GM12878 (cell line): ENCODE measurements at regions of chr9 and their contacts with region 1.

Region 1: DNA sequence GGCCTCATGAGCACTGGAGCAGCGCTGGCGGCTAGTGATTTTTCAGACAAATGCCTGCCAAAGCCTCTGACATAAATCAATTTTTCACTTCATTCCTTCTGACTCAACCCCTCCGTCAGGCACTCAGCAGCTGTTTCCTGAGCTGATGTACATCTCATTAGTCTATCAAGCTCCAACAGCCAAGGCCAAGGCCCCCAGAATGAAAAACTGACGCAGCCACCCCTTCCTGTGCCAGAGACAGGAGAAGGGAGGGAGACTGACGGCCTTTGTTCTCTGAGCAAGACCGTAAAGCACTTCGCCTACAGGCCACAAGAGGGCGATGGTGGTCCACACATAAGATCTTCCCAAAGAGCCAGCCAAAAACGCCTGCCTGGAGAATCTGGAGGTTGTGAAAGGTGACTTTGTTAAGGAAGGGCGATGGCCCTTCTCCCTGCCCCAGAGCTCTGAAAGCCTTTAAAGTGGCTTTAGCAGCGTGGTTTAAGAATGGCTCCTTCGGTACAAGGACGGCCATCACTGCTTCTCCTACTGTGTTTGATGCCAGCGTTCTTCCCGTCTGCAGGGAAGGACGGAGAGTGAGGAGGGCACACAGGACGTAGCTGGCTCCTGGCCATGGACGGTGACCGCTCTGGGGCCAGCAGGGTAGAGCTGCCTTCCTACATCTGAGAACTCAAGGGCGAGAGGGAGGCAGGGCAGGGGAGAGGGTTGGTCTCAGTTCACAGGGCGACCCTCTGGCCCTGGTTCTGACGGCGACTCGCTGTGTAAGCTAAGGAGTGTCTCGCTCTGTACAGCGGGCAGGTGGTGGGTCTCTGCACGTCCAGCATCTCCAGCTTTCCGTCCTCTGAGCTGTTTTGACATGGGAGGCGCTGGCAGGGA is 37.0 kb downstream of the ALG2 start:
- DNase-seq: peak; percentile 80
- ATAC-seq: peak; percentile 79
- H3K4me3 ChIP-seq: no peak overlapping the region
- H3K27ac ChIP-seq: peak overlapping the region; percentile 49
- H3K4me1 ChIP-seq: peaks cover 66% of the 10 kb centered on the region
- H3K27me3 ChIP-seq: no peaks in the 10 kb centered on the region
- CTCF ChIP-seq: peak; percentile 90 to 98 (median 94)
- EP300 ChIP-seq: no peak; a peak in 1 of 4 replicates
- POLR2A ChIP-seq: 0 out of 2 replicates have a peak, but pooled peaks have one; percentile 18
- RAD21 ChIP-seq: peak; percentile 93

Region 2: GRCh38 chr9:99085949-99086948 is 98.5 kb before region 1 on chr9:
- CTCF ChIA-PET with region 1: no interaction called
- POLR2A ChIA-PET with region 1: no interaction called
- RAD21 ChIA-PET with region 1: no interaction called
- SMC1A ChIA-PET with region 1: no interaction called
- in situ Hi-C with region 1: no loop called
- intact Hi-C with region 1: no loop called
- DNase-seq: no peak
- ATAC-seq: no peak
- H3K4me3 ChIP-seq: no peak overlapping the region
- H3K27ac ChIP-seq: no peak overlapping the region
- H3K4me1 ChIP-seq: no peaks in the 10 kb centered on the region
- H3K27me3 ChIP-seq: peaks cover 0 to 1% of the 10 kb centered on the region in 2 experiments; a peak in 1 of 4 replicates
- CTCF ChIP-seq: no peak
- EP300 ChIP-seq: no peak
- POLR2A ChIP-seq: no peak
- RAD21 ChIP-seq: no peak

Region 3: GRCh38 chr9:99173570-99174504 is 10.9 kb before region 1 on chr9:
- CTCF ChIA-PET with region 1: interaction called, 131 read pairs
- POLR2A ChIA-PET with region 1: interaction called, 11 read pairs
- RAD21 ChIA-PET with region 1: interaction called, 147 read pairs
- SMC1A ChIA-PET with region 1: interaction called, 150 read pairs
- in situ Hi-C with region 1: no loop called
- intact Hi-C with region 1: no loop called
- DNase-seq: no peak
- ATAC-seq: peak; percentile 81
- H3K4me3 ChIP-seq: no peak overlapping the region
- H3K27ac ChIP-seq: no peak overlapping the region
- H3K4me1 ChIP-seq: peaks cover 8% of the 10 kb centered on the region
- H3K27me3 ChIP-seq: no peaks in the 10 kb centered on the region
- CTCF ChIP-seq: no peak
- EP300 ChIP-seq: no peak
- POLR2A ChIP-seq: no peak
- RAD21 ChIP-seq: no peak

Region 4: DNA sequence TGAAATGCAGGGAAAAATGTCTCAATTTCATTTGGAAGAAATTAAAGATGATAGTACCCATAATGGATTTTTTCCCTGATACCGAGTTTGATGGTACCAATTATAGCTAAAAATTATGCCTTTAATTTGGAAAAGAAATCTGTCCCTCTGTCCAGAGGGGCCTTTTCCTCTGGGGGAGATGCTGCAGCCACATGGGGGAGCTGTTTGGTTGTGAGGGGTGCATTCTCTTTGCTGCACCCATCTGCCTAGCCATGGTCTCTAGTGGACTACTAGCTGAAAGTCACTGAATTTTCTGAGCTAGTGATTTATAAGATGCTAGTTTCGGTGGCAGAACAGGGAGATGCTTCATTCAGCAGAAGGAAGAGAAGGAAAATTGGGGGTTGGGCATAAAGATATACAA is 47.0 kb after region 1 on chr9:
- CTCF ChIA-PET with region 1: interaction called, 116 read pairs
- POLR2A ChIA-PET with region 1: interaction called, 6 read pairs
- RAD21 ChIA-PET with region 1: interaction called, 121 read pairs
- SMC1A ChIA-PET with region 1: interaction called, 73 read pairs
- in situ Hi-C with region 1: no loop called
- intact Hi-C with region 1: loop called (anchors 5 kb)
- DNase-seq: peak; percentile 25
- ATAC-seq: peak; percentile 53
- H3K4me3 ChIP-seq: no peak overlapping the region
- H3K27ac ChIP-seq: no peak overlapping the region
- H3K4me1 ChIP-seq: peaks cover 26% of the 10 kb centered on the region
- H3K27me3 ChIP-seq: no peaks in the 10 kb centered on the region
- CTCF ChIP-seq: peak; percentile 85 to 90 (median 88)
- EP300 ChIP-seq: no peak
- POLR2A ChIP-seq: no peak
- RAD21 ChIP-seq: peak; percentile 81

Region 5: DNA sequence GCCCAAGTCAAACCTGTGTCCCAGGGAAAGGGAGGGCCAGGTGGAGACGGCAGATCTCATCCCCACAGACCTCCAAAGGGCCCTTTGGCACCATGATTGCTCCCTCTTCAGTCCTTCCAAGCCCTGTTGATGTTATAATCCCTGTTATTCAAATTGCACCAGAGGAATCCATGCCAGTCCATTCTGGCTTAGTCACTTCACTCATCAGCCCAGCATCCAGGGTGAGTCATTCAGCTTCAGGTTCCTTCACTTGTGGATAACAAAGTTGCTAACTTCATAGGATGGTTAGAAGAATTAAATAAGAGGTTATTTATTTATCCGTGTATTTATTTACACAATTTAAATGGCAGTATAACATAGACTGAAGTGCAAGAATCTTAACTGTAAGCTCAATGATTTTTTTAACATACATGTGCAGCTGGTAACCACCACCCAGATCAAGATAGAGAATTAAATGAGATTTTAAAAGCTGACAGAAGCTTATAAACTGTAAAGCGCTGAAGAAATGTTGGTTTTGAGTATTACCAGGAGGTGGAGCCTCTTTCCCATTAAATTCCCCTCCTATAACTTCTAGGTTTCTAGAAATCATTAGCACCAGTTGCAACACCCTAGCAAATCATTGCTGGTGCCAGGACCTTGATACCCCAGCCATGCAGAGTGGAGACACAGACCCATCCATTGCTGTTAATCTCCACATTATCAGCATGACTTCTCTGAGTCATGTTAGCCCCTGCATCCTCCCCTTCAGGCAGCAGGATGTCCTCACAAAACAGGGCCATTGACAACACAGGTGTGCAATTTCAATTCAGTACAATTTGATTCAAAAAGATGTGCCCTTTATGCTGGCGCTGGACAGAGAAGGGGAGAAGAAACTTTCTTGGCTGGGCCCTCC is 114.7 kb after region 1 on chr9:
- CTCF ChIA-PET with region 1: interaction called, 6 read pairs
- POLR2A ChIA-PET with region 1: no interaction called
- RAD21 ChIA-PET with region 1: interaction called, 5 read pairs
- SMC1A ChIA-PET with region 1: interaction called, 11 read pairs
- in situ Hi-C with region 1: no loop called
- intact Hi-C with region 1: no loop called
- DNase-seq: no peak
- ATAC-seq: peak; percentile 55
- H3K4me3 ChIP-seq: no peak overlapping the region
- H3K27ac ChIP-seq: no peak overlapping the region
- H3K4me1 ChIP-seq: no peaks in the 10 kb centered on the region
- H3K27me3 ChIP-seq: no peaks in the 10 kb centered on the region
- CTCF ChIP-seq: peak in 2 of 3 experiments; percentile 15 to 39; a peak in 2 of 6 replicates
- EP300 ChIP-seq: no peak
- POLR2A ChIP-seq: no peak
- RAD21 ChIP-seq: peak; percentile 61

Region 6: GRCh38 chr9:99807276-99807852 is 622.7 kb after region 1 on chr9:
- CTCF ChIA-PET with region 1: interaction called, 5 read pairs
- POLR2A ChIA-PET with region 1: no interaction called
- RAD21 ChIA-PET with region 1: no interaction called
- SMC1A ChIA-PET with region 1: interaction called, 4 read pairs
- in situ Hi-C with region 1: loop called (anchors 5 kb)
- intact Hi-C with region 1: no loop called
- DNase-seq: no peak
- ATAC-seq: peak; percentile 87
- H3K4me3 ChIP-seq: no peak overlapping the region
- H3K27ac ChIP-seq: no peak overlapping the region
- H3K4me1 ChIP-seq: peaks cover 6% of the 10 kb centered on the region
- H3K27me3 ChIP-seq: no peaks in the 10 kb centered on the region
- CTCF ChIP-seq: peak; percentile 73 to 81 (median 75)
- EP300 ChIP-seq: no peak
- POLR2A ChIP-seq: no peak
- RAD21 ChIP-seq: peak; percentile 89

Region 7: DNA sequence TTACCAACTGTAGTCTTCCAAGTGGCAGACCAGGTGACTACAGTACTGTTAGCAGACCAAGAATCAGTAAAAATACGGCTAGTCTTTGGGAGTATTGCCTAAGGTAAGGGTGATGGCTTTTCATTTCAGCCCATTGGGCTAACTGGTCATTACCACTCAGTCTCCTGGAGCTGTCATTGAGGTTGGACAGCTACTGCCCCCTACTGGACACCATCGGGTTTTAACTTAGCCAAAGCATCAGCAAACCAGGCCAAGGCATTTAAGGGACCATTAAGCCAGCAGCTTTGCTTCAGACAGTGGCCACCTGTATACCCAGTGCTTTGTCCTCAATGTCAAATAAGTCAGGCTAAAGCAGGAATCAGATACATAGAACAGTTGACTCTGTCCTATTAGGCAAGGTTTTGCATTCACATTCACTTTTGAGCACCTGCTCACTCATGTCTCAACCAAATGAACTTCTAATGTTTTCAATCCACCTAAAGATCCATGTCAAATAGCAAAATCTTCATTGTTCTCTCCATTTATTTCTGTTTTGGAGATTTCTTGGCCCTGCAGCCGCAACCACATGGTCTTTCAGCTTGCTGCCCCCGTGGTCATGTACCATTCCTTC is 1031.6 kb after region 1 on chr9:
- CTCF ChIA-PET with region 1: interaction called, 8 read pairs
- POLR2A ChIA-PET with region 1: no interaction called
- RAD21 ChIA-PET with region 1: interaction called, 6 read pairs
- SMC1A ChIA-PET with region 1: interaction called, 6 read pairs
- in situ Hi-C with region 1: loop called (anchors 10 kb)
- intact Hi-C with region 1: loop called (anchors 5 kb)
- DNase-seq: peak; percentile 40
- ATAC-seq: peak; percentile 96
- H3K4me3 ChIP-seq: no peak overlapping the region
- H3K27ac ChIP-seq: no peak overlapping the region
- H3K4me1 ChIP-seq: peaks cover 17% of the 10 kb centered on the region
- H3K27me3 ChIP-seq: no peaks in the 10 kb centered on the region
- CTCF ChIP-seq: peak; percentile 75 to 79 (median 77)
- EP300 ChIP-seq: no peak
- POLR2A ChIP-seq: no peak
- RAD21 ChIP-seq: peak; percentile 88